ENCODE measurements at regions of chr1 and their contacts with region 1.

Region 1: DNA sequence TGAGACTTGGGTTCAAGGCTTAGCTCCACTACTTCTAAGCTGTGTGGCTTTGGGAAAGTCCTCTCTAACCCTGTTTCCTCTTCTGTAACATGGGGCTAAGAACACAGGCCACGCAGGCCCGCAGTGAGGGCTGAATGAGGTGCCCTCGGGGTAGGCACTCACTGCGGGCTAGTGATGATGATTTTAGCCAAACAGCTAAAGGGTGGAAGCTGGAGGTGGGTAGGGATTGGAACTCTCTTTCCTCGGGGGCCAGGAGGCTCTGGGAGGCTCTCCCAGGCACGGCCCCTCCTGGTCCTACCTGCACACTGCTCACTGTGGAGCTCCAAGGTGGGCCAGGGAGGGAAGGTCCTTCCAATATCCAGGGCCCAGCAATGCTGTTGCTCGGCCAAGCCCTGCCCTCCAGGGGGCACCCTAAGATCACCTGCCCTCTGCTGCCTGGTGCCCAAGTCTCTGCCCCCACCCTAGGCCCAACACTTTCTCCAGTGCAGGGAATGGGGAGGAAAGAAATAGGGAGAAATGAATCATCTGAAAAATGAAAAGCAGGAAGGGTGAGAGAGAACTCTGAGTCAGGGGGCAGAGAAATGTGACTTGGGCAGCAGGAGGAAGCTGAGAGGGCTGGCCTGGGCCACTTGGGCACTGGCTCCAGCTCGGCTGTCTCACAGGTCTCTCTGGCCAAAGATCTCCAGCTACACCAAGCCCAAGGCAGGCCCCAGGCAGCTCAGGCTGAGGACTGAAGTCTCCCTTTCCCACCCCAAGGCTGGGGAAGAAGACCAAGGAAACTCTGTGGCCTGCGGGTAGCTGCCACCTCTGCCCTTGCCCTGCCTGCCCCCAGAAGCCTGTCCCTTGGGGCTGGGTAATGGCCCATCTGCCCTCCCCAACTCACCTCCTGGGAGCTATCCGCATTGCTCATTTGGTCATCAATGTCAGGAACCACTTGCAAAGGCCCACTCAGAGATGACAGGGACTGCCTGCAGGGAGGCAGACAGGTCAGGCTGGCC is 19.3 kb upstream of the EVA1B start:
- DNase-seq: peak in 2 of 5 donors; percentile 52 to 62
- H3K4me3 ChIP-seq: no peak overlapping the region
- H3K27ac ChIP-seq: peak overlapping the region; percentile 8 to 13
- H3K4me1 ChIP-seq: no peaks in the 10 kb centered on the region
- H3K27me3 ChIP-seq: no peaks in the 10 kb centered on the region
- CTCF ChIP-seq: peak in 2 of 3 donors; percentile 37 to 39
- EP300 ChIP-seq: no peak
- POLR2A ChIP-seq: no peak

Region 2: DNA sequence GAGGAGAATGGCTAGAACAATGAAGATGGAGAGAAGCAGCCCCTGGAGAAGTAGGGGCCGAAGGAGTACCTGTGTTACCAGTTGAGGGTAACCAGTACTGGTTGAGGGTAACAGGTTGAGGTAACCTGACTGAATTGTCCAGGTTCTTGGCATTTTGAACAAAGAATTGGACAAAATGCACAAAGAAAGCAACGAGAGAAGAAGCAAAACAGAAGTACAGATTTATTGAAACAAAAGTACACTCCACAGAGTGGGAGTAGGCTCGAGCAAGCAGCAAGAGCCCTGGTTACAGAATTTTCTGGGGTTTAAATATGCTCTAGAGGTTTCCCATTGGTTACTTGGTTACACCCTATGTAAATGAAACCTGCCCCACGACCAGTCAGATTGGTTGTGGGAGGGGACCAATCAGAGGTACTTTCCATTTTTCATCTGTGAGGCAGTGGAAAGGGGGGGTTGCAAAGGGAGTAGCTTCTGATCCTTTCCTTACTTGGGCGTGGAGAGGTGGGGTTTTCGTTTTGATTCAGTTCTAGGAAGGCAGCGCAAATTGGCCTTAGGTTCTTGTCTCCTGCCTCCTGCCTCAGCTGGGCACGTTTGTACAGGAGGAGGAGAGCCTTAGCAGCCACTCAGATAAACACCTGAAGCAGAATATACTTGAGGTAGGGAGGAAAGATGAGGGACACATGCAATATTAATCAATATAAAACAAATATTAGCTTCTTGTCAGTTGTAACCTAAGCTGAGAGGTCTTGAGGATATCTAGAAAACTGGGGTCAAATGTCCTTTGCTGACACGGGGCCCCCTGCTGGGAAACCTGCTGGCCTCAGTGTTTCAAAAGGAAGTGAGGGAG is 69.1 kb after region 1 on chr1:
- intact Hi-C with region 1: loop called in 2 of 4 experiments (anchors 10 kb)
- DNase-seq: no peak
- H3K4me3 ChIP-seq: no peak overlapping the region
- H3K27ac ChIP-seq: no peak overlapping the region
- H3K4me1 ChIP-seq: no peaks in the 10 kb centered on the region
- H3K27me3 ChIP-seq: no peaks in the 10 kb centered on the region
- CTCF ChIP-seq: no peak
- EP300 ChIP-seq: no peak
- POLR2A ChIP-seq: no peak

Region 3: GRCh38 chr1:36420836-36421664 is 78.3 kb after region 1 on chr1:
- intact Hi-C with region 1: loop called in 3 of 4 experiments (anchors 5 to 10 kb)
- DNase-seq: peak; percentile 77 to 94 (median 91)
- H3K4me3 ChIP-seq: no peak overlapping the region
- H3K27ac ChIP-seq: no peak overlapping the region
- H3K4me1 ChIP-seq: peaks cover 1% of the 10 kb centered on the region
- H3K27me3 ChIP-seq: no peaks in the 10 kb centered on the region
- CTCF ChIP-seq: peak; percentile 74 to 82 (median 75)
- EP300 ChIP-seq: no peak
- POLR2A ChIP-seq: no peak

Measured in ovary (tissue), 10 donors.